Psoas muscle (tissue), 8 donors: ENCODE measurements at regions of chr10 and their contacts with region 1.

Region 1: DNA sequence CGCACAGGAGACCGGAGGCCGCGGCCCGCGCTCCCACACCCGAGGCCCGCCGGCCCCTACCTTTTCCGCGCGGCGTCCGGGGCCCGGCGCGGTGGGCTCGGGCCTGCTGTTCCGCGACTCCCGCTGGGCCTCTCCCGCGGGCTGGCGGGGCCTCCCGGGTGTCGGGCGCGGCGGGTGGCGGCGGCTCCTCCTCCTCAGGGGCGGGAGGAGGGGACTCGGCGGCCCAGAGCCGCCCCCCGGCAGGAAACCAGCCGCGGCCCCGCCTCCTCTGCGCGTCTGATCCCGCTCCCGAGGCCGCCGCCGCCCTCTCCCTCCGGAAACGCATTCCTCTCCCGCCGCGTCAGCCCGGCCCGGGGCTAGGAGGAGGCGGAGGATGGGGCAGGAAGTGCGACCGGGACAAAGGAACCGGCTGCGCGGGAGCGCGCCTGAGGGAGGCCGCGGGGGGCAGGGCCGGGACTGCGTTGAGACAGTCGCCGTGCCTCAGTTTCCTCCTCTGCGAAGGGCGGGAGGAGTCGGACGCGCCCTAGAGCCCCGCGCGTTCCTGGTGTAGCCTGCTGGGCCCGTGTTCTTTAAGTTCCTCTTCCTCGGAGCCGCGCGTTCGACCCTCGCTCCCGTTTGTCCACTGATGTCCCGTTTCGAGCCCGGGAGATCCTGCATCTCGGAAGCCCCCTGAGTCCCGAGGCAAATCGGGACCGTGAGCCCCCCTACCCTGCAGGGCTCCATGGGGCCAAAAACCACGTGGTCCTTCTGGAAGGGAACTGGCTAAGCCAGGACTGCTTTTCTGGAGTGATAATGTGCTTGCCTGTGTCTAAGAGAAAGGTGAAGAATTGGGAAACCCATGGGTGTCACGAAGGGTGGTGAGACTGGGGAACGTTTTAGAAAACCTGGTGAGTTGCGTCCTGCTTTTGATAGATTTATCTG is at the start of gene ITGB1:
- DNase-seq: peak; percentile 98 to 99
- ATAC-seq: peak; percentile 94 to 96 (median 96)
- H3K4me3 ChIP-seq: peak within 1 kb of the TSS; percentile 95
- H3K27ac ChIP-seq: peak within 1 kb of the TSS; percentile 98
- H3K4me1 ChIP-seq: peaks cover 67% of the 10 kb centered on the region
- H3K27me3 ChIP-seq: no peaks in the 10 kb centered on the region
- CTCF ChIP-seq: no peak
- total RNA-seq, gene ITGB1: 222 to 485 (median 241) TPM

Region 2: GRCh38 chr10:32938554-32939061 is 19.7 kb before region 1 on chr10:
- intact Hi-C with region 1: loop called in 1 of 2 experiments (anchors 2 kb)
- DNase-seq: peak in 1 of 2 donors; percentile 61
- ATAC-seq: peak; percentile 67 to 82 (median 76)
- H3K4me3 ChIP-seq: peak overlapping the region; percentile 47
- H3K27ac ChIP-seq: peak overlapping the region; percentile 83
- H3K4me1 ChIP-seq: peaks cover 72% of the 10 kb centered on the region
- H3K27me3 ChIP-seq: no peaks in the 10 kb centered on the region
- CTCF ChIP-seq: no peak

Region 3: DNA sequence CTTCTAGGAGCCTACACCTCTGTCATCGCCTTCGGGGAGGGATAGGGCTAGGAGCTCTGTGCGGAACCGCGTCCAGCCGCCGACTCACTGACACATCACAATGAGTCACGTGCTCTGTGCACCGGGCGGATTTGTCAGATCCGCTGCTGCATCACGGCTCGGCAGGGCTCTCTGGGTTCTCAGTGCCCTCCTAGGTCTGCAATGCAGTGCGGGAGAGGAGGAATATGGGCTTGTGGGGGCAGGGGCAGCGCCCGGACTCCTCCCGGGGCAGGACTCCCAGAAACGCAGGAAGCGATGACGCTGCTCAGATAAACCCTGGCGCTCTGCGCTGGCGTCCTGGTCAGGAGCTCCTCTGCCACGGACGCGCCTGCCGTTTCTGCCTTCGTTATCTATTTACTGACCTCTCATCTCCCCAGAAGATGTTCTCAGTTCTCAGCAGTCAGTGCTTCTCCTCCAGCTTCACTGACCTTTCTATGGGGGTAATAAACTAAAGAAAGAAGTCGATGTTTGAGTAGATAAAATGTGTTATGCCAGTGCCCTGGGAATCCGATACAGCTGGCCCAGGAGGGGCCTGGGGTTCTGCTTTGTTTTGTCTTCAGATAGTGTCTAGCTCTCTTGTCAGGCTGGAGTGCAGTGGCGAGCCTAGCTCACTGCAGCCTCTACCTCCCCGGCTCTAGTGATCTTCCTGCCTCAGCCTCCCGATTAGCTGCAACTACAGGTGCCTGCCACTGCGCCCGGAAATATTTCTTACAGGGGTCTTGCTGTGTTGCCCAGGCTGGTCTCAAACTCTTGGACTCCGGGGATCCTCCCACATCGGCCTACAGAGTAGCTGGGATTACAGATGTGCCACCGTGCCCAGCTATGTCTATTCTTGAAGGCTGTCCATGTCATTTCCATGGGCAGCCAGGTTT is 22.5 kb after region 1 on chr10:
- intact Hi-C with region 1: loop called in 1 of 2 experiments (anchors 2 kb)
- DNase-seq: peak; percentile 92 to 95
- ATAC-seq: peak; percentile 98 to 99 (median 99)
- H3K4me3 ChIP-seq: peak overlapping the region; percentile 70
- H3K27ac ChIP-seq: peak overlapping the region; percentile 91
- H3K4me1 ChIP-seq: peaks cover 8% of the 10 kb centered on the region
- H3K27me3 ChIP-seq: no peaks in the 10 kb centered on the region
- CTCF ChIP-seq: no peak